ENCODE measurements at regions of chr6 and their contacts with region 1.

Region 1: DNA sequence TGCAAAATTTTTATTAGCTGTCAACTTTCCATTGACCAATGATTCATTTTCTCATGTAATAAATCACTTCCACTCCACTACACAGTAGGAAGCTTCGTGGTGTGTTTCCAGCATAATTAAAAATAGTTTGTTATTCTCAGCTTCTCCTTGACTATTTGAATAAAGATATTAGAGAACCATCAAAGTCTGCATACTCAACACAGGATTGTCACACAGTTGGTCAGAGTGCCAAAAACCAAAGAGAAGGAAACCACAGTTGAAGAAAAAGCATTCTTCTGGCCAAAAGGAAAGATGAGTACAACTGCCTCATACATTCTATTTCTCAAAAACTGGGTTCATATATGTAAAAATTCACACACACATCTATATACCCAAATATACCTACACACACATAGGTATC is 455.1 kb upstream of the HSF2 start:
- DNase-seq: no peak
- ATAC-seq: no peak
- H3K4me3 ChIP-seq: no peak overlapping the region
- H3K27ac ChIP-seq: no peak overlapping the region
- H3K4me1 ChIP-seq: no peaks in the 10 kb centered on the region
- H3K27me3 ChIP-seq: no peaks in the 10 kb centered on the region
- CTCF ChIP-seq: no peak

Region 2: DNA sequence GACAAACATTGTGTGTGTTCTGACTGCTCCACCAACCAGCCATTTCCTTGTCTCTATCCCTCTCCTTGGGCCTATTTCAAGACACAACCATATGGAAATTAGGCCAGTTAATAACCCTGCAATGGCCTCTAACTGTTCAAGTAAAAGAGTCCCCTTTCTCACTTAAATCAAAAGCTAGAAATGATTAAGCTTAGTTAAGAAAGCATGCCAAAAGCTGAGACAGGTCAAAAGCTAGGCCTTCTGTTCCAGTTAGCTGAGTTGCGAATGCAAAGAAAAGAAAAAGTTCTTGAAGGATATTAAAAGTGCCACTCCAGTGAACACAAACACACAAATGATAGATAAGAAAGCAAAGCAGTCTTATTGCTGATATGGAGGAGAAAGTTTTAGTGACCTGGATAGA is 504.7 kb after region 1 on chr6:
- intact Hi-C with region 1: loop called in 1 of 2 experiments (anchors 10 kb)
- DNase-seq: no peak
- ATAC-seq: no peak
- H3K4me3 ChIP-seq: no peak overlapping the region
- H3K27ac ChIP-seq: no peak overlapping the region
- H3K4me1 ChIP-seq: no peaks in the 10 kb centered on the region
- H3K27me3 ChIP-seq: no peaks in the 10 kb centered on the region
- CTCF ChIP-seq: no peak